Left ventricle myocardium superior (tissue), 1 donor: ENCODE measurements at regions of chr5 and their contacts with region 1.

Region 1: DNA sequence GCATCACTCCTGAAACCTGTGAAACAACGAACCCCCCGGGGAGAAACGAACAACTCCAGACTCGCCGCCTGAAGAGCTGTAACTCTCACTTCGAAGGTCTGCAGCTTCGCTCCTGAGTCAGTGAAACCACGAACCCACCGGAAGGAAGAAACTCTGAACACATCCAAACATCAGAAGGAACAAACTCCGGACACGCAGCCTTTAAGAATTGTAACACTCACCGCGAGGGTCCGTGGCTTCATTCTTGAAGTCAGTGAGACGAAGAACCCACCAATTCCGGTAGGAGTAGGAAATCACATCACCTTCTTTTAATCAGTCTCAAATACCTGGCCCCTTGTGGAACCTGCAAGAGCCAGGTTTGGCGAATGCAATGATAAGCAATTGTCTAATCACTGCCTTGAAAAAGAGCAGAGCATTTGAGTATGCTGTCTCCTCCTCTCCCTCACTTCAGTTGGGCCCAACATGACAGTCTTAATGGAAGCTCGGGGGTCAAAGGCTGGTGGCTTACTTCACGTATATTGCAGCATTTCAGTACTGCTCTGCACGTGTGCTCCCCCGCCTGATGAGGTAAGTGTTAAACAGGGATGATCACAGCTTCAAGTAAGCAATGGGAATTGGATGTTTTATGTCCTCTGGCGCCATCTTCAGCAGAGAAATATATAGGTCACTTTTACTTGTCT is 473 bp downstream of the IRGM start:
- DNase-seq: no peak
- ATAC-seq: peak; percentile 91

Region 2: DNA sequence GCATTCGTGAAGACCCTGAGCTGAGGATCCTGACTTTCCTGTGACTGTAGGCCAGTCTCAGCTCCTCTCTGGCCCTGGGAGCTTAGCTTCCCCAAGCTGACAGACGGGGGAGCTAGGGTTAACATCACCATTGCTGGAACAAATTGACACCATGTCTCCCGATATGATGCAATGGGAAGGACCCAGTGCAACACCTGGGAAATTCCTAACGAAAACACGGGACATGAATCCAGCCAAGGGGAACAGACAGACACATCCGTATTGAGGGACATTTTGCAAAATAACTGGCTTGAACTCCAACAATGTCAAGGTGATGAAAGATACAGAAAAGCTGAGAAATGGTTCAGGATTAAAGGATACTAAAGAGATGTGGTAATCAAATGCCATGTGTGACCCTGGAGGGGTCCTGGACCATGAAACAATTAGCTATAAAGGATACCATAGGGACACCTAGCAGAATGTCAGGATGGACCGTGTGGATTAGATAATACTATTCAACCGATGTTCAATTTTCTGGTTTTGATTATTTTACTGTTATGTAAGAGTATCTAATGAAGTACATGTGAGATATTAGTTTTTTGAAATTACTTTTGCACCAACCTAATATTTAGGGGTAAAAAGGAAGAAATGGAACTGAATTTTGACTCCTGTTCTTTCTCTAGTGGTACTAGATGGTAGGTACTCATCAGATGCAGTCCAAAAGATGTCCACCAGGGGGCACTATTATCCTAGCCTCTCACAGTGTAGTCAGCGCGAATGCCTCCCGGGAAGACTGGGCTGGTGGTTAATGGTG is 286.2 kb before region 1 on chr5:
- intact Hi-C with region 1: loop called (anchors 10 kb)
- DNase-seq: peak; percentile 61
- ATAC-seq: peak; percentile 87

Region 3: DNA sequence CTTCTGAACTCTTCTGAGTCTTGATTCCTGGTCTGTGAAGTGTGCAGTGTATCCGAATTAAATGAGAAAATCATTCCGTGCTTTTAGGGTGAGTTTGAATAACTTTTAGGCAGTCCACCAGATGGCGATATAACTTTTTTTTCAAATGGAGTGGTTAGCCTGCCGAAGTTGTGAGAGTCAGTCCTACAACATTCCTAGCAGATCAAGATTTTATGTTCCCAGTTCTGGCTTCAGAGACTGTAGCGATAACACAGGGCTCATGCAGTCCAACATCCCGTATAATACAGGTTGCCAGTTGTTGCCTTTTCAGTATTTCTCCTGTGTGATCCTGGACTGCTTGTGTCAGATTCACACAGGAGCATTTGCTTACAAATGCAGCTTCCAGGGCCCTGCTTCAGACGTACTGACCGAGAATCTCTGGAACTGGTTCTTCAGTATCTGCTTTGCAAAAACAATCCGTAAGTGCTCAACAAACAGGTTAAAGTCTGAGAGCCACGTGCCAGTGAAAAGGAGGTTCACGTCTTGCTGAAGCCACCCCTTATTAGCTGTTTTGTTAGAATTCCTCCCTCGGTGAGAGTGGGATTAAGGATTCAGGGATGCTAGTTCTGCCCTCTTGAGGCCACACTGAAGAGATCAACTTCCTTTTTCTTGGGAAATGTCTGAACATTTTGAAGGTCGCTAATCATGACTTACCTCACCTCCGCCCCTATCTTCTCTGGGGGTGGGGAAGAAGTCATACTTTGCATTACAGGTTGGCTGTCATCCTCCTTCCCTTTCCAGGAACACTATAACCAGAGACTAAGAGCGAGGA is 45.5 kb before region 1 on chr5:
- intact Hi-C with region 1: loop called (anchors 5 kb)
- DNase-seq: no peak
- ATAC-seq: peak; percentile 86

Region 4: DNA sequence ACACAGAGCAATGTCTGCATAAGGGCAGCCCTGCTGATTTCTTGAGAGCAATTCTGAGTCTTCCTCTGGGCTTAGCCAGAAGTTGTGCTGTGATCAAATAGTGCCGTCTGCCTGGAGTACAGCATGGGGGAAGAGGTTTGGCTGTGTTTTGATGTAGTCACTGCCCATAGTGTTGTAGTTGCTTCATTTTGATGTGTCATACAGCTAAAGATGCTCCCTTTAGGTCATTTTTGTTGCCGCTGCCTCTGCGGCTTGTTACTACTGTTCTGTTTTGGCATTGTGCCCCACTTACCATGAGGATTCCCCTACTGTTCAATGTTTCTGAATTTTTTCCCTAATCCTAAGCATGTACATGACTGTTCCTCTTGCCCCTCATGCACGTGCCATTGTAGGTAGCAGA is 623.6 kb after region 1 on chr5:
- intact Hi-C with region 1: no loop called
- DNase-seq: no peak
- ATAC-seq: no peak